Lower lobe of right lung (tissue), 2 donors: ENCODE measurements at regions of chr9 and their contacts with region 1.

Region 1: GRCh38 chr9:133792721-133793470 is 54.7 kb upstream of the SARDH start:
- DNase-seq: peak; percentile 84
- ATAC-seq: peak; percentile 86 to 88
- H3K4me3 ChIP-seq: peak overlapping the region; percentile 15
- H3K27ac ChIP-seq: no peak overlapping the region
- H3K4me1 ChIP-seq: peaks cover 38% of the 10 kb centered on the region
- H3K27me3 ChIP-seq: no peaks in the 10 kb centered on the region
- CTCF ChIP-seq: peak; percentile 99

Region 2: GRCh38 chr9:133589454-133590227 is 203.3 kb before region 1 on chr9:
- intact Hi-C with region 1: no loop called
- DNase-seq: no peak
- ATAC-seq: no peak
- H3K4me3 ChIP-seq: no peak overlapping the region
- H3K27ac ChIP-seq: no peak overlapping the region
- H3K4me1 ChIP-seq: peaks cover 11% of the 10 kb centered on the region
- H3K27me3 ChIP-seq: peaks cover 27% of the 10 kb centered on the region
- CTCF ChIP-seq: peak; percentile 52

Region 3: DNA sequence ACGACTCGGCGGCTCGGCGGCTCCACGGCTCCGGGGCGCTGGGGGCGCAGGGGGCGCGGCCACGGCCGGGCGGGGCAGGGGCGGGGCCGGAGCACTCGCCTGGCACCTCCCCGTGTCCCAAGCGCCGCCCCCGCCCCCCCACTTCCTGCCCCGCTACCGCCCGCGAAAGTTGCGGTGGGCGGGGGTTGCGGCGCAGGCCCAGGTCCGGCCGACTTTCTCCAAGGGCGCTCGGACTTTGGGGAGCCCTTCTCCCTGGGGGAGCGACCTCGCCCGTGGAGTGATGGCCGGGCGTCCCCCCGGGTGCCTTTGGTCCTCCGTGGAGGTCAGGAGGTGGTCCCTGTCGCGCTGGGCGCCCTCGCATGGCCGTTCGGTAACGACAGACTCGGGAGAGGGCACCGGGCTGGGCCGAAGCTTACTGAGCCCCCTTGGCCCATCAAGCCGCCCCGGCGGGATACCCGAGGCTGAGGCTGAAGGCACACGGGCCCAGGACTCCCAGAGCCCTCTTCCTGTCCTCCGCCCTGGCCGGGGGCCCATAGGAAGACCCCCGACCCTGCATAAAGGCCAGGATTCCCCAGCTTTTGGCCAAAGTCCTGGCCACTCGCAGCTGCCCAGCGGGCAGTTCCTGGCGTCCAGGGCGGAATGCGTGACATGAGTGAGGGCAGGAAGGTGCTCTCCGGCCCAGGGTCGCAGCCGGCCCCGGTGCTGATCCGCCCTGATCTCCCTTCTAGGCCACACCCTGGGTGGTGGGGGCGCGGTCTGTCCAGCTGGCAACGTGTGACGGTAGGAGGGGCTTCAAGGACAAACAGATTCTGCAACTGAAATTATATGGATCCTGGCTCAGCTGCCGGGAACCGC is 200.1 kb after region 1 on chr9:
- intact Hi-C with region 1: loop called (anchors 5 kb)
- DNase-seq: peak; percentile 84
- ATAC-seq: peak; percentile 88 to 89
- H3K4me3 ChIP-seq: peak overlapping the region; percentile 75
- H3K27ac ChIP-seq: peak overlapping the region; percentile 90
- H3K4me1 ChIP-seq: peaks cover 29% of the 10 kb centered on the region
- H3K27me3 ChIP-seq: no peaks in the 10 kb centered on the region
- CTCF ChIP-seq: peak; percentile 44